HEK293T (cell line): ENCODE measurements at regions of chr9 and their contacts with region 1.

Region 1: GRCh38 chr9:22008736-22009562 is at the start of gene CDKN2B:
- DNase-seq: peak; percentile 100

Region 2: GRCh38 chr9:21506626-21507484 is 502.1 kb before region 1 on chr9:
- CTCF ChIA-PET with region 1: no interaction called
- POLR2A ChIA-PET with region 1: no interaction called
- DNase-seq: no peak

Region 3: GRCh38 chr9:21812946-21813568 is 195.9 kb before region 1 on chr9:
- CTCF ChIA-PET with region 1: interaction called, 14 read pairs
- POLR2A ChIA-PET with region 1: no interaction called
- DNase-seq: peak; percentile 80

Region 4: GRCh38 chr9:21995177-21996086 is 13.5 kb before region 1 on chr9:
- CTCF ChIA-PET with region 1: interaction called, 9 read pairs
- POLR2A ChIA-PET with region 1: interaction called, 24 read pairs
- DNase-seq: peak; percentile 67

Region 5: GRCh38 chr9:22119537-22120158 is 110.7 kb after region 1 on chr9:
- CTCF ChIA-PET with region 1: interaction called, 13 read pairs
- POLR2A ChIA-PET with region 1: interaction called, 5 read pairs
- DNase-seq: peak; percentile 43

Region 6: DNA sequence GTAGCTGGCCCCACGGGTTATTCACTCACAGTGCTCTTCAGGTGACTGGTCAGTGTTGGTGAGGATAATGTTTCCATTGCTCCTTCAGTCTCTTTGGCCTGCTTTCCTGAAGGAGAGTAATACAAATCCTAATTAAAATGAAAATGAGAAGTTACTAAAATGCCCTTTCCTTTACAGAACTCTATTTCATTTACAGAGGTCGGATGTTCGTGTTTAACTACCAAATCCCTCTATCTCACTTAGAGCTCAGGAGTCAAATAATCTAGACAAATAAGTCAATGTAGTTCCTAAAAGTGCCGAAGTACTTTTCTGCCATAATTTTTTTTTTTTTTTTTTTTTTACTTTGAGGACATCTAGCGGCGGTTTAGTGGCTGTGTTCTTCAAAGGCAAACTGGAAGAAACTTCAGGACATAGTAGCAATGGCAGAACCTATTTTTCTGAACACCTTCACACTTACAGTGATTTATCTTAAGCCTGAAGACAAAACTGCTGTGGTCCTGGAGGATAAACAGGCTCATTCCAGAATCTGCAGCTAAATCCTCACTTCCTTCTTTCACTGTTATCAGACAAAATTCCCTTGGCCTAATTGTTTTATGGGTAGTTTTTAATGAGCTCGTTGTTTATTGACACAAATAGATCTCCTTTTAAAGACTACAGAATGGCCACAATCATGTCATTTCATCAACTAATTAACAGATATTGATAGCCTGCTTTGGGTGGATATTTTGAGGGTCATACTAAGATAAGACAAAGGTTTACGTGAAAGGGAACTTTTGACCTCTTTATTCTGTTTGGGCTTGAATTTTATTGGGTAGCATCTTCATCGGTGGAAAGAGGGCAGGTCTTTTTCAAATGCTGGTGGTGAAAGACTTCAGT is 230.1 kb after region 1 on chr9:
- CTCF ChIA-PET with region 1: interaction called, 18 read pairs
- POLR2A ChIA-PET with region 1: interaction called, 5 read pairs
- DNase-seq: peak; percentile 59

Region 7: DNA sequence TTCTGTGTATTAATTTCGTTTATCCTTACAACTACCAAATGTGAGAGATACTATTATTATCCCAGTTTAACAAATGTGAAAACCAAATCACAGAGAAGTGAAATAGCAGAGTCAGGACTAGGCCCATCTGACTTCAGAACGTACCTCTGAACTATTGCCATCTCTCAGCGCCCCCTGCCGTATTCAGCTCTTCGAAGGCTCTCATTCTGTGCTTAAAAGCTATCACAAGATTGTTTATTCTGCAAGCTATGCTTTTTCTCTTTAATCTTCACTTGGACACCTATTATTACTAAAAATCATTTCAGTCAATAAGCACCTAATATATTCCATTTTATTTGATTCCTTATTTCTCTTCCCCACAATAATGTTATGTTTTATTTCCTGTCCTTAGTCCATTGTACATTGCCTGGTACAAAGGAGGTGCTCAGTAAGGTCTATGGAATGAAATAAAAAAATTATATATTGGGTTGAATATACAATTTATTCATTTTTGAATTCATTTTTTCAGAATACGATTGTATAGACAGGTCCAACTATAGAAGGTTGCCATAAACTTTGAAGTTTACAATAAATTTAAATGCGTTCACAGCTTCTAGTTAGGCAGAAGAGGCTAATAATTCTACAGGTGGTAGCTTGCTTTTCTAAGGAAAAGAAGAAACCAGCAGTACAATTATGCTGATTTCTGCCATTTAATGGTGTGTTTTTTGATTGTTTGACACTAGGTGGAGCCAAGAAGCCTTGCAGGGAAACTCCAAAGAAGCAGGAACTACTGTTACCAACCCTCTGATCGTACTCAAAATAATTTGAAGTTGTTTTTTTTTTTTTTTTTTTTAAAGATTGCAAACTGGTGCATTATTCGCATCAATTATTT is 235.4 kb after region 1 on chr9:
- CTCF ChIA-PET with region 1: interaction called, 18 read pairs
- POLR2A ChIA-PET with region 1: no interaction called
- DNase-seq: peak; percentile 55